Endothelial cell of umbilical vein (primary cell): ENCODE measurements at regions of chr22 and their contacts with region 1.

Region 1: GRCh38 chr22:30386960-30387827 is at the start of gene RNF215:
- DNase-seq: peak; percentile 78
- H3K4me3 ChIP-seq: peak within 1 kb of the TSS; percentile 36 to 70 (median 43)
- H3K27ac ChIP-seq: peak within 1 kb of the TSS; percentile 20
- H3K4me1 ChIP-seq: peaks cover 15% of the 10 kb centered on the region
- H3K27me3 ChIP-seq: no peaks in the 10 kb centered on the region
- CTCF ChIP-seq: peak; percentile 90 to 91
- POLR2A ChIP-seq: no peak
- total RNA-seq, gene RNF215: 24.4 and 26.9 TPM in 2 replicates

Region 2: DNA sequence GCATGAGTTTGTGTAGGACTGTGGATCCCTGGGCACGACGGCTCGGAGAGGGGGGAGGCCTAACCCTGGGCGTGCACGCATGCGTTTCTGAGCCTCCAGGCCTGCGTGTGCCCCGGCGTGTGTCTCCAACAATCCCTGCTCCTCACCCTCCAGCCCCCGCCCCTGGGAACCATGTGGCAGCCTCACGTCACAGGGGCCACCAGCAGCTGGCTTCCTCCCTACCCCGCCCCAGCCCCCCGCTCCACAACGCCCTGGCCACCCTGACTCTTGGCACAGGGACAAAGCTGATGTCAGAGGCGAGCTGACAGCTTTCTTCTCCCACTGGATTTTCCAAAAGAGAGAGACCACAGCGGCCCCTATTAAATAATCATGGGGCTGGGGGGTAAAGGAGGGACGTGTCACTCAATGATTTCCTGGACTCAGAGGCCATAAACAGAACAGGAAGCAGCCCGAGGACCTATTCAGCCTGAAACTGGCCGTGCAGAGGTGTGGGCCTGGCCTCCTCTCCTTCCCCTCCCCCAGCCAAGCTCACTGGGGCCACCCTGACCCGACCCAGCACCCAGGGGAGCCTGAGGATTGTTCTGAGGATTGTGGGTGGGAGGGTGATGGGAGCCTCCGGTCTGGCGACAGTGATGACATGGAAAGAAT is 133.9 kb before region 1 on chr22:
- CTCF ChIA-PET with region 1: interaction called, 33 read pairs
- POLR2A ChIA-PET with region 1: no interaction called
- dilution Hi-C with region 1: no loop called
- intact Hi-C with region 1: no loop called
- DNase-seq: no peak
- H3K4me3 ChIP-seq: no peak overlapping the region
- H3K27ac ChIP-seq: no peak overlapping the region
- H3K4me1 ChIP-seq: peaks cover 5% of the 10 kb centered on the region
- H3K27me3 ChIP-seq: peaks cover 0 to 4% of the 10 kb centered on the region in 2 experiments
- CTCF ChIP-seq: no peak
- POLR2A ChIP-seq: no peak

Region 3: DNA sequence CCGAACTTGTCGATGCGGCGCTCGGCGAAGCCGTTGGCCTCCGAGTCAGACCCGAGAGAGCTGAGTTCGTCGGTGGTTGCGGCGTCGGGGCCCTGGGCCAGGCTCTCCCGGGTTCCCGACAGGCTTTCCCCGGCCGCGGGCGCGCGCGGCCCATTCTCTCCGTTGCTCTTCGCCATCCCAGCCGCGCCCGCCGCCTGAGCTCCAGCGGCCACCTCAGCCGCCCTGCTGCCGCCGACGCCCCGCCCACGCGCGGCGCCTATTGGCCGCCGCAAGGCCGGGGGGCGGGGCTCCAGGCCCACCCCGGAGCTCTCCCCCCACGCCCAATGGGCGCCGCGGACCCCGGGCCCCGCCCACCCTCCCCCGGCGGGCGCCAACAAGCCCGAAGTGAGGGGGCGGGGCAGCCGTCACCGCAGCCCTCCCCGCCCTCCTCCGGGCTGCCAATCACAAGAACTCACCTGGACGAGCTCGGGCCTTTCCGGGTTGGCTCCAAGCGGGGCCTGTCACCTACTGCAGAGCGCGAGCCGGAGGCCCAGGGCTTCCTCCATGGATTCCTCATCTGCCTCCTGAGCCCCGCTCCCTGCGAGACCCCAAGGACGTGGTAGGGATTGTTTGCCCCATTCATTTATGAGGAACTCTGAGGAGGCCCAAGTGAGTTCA is 60.4 kb before region 1 on chr22 and contains the start of gene TBC1D10A:
- CTCF ChIA-PET with region 1: interaction called, 10 read pairs
- POLR2A ChIA-PET with region 1: no interaction called
- dilution Hi-C with region 1: no loop called
- intact Hi-C with region 1: no loop called
- DNase-seq: peak; percentile 86
- H3K4me3 ChIP-seq: peak within 1 kb of the TSS; percentile 62 to 67 (median 64)
- H3K27ac ChIP-seq: peak within 1 kb of the TSS; percentile 38
- H3K4me1 ChIP-seq: peaks cover 13% of the 10 kb centered on the region
- H3K27me3 ChIP-seq: no peaks in the 10 kb centered on the region
- CTCF ChIP-seq: no peak
- POLR2A ChIP-seq: peak; percentile 63
- total RNA-seq, gene TBC1D10A: 10.0 and 11.3 TPM in 2 replicates

Region 4: DNA sequence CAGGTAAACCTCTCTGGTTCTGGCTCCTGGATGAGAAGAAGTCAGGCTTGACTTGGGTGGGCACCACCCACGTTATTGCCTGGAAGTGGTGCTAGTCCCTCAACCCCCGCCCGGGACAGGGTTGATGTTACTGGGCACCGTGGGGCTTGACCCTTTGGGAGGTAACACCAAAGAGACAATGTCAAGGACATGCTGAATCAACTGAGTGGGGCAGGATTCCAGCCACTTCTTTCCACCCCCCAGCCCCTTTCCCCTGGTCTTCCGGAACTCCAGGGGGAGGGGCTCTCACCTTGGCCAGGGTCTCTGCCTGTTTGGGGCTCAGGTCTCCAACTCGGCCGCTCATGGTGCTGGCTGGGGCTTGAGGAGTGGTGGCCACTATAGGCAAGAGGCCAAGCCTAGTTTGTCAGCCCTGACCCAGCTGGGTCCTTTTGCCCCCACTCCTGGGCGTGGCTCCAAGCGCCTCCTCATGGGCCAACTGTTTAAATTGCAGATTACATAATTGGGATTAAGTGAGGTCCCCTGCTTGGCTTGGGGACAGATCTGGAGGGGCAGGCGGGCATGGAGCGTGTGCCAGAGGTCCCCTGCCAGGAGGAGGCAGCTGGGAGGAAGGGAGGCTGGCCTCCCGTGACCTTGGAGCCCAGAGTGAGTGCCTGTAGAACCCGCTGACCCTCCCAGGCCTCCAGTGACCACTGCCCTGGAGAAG is 84.6 kb after region 1 on chr22 and contains the start of gene SEC14L3:
- CTCF ChIA-PET with region 1: no interaction called
- POLR2A ChIA-PET with region 1: no interaction called
- dilution Hi-C with region 1: no loop called
- intact Hi-C with region 1: no loop called
- DNase-seq: no peak
- H3K4me3 ChIP-seq: no peak within 1 kb of the TSS
- H3K27ac ChIP-seq: no peak within 1 kb of the TSS
- H3K4me1 ChIP-seq: no peaks in the 10 kb centered on the region
- H3K27me3 ChIP-seq: peaks cover 9 to 11% of the 10 kb centered on the region in 2 experiments
- CTCF ChIP-seq: no peak
- POLR2A ChIP-seq: no peak
- total RNA-seq, gene SEC14L3: not detected in 2 replicates

Region 5: GRCh38 chr22:30485362-30485988 is 98.3 kb after region 1 on chr22:
- CTCF ChIA-PET with region 1: interaction called, 50 read pairs
- POLR2A ChIA-PET with region 1: no interaction called
- dilution Hi-C with region 1: no loop called
- intact Hi-C with region 1: loop called (anchors 1 kb)
- DNase-seq: peak; percentile 59
- H3K4me3 ChIP-seq: no peak overlapping the region
- H3K27ac ChIP-seq: no peak overlapping the region
- H3K4me1 ChIP-seq: no peaks in the 10 kb centered on the region
- H3K27me3 ChIP-seq: no peaks in the 10 kb centered on the region
- CTCF ChIP-seq: peak; percentile 86 to 93
- POLR2A ChIP-seq: no peak